PC-9 (cell line): ENCODE measurements at regions of chr14 and their contacts with region 1.

Region 1: DNA sequence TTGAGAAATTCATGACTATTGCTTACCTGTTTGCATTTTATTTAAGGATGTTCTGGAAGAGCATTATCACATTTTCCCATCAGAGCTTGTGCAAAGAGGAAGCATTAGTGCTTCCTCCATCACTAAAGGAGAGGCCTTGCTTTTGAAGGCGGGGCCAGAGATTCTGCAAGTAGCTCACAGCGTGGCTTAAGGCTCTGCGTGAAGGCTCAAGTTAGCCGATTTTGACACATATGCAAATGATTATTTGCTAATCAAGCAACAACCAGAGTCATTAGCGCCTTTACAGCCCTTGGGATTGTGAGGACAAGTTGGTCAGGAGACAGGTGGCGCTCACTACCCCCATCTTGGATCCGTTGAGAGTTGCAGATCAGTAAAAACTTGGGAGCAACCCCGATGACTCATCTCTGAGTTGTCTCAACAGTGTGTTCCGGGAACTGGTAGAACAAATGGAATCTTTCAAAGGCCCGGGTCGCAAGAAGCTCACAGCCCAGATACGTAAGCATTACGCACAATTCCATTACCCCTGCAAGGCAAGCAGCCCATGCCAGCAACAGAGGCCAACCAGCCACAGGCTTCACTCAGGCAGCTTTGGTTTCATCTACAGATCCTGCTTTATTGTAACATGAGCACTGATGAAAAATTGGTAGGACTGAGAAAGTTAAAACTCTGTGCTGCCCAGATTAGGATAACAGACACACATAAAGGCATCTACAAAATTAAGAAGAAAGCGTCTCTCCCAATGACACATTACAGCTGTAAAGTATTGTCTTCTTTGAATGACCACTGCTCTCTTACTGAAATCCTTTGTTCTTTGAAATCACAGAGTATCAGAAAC is 34.9 kb upstream of the SPTSSA start:
- DNase-seq: peak; percentile 70 to 89
- H3K4me3 ChIP-seq: peak overlapping the region; percentile 27; the same call in 1 of the 2 replicates
- H3K27ac ChIP-seq: peak overlapping the region; percentile 85
- H3K4me1 ChIP-seq: peaks cover 33% of the 10 kb centered on the region
- H3K27me3 ChIP-seq: no peaks in the 10 kb centered on the region
- CTCF ChIP-seq: no peak; the same call in 1 of the 2 replicates

Region 2: GRCh38 chr14:34425095-34425851 is 71.6 kb before region 1 on chr14:
- CTCF ChIA-PET with region 1: no interaction called
- POLR2A ChIA-PET with region 1: interaction called, 9 read pairs
- intact Hi-C with region 1: loop called (anchors 5 kb)
- DNase-seq: peak; percentile 67 to 87
- H3K4me3 ChIP-seq: no peak overlapping the region
- H3K27ac ChIP-seq: peak overlapping the region; percentile 93
- H3K4me1 ChIP-seq: peaks cover 22% of the 10 kb centered on the region
- H3K27me3 ChIP-seq: no peaks in the 10 kb centered on the region
- CTCF ChIP-seq: no peak

Region 3: GRCh38 chr14:34470319-34470718 is 26.6 kb before region 1 on chr14:
- CTCF ChIA-PET with region 1: interaction called, 10 read pairs
- POLR2A ChIA-PET with region 1: no interaction called
- intact Hi-C with region 1: no loop called
- DNase-seq: no peak
- H3K4me3 ChIP-seq: no peak overlapping the region
- H3K27ac ChIP-seq: no peak overlapping the region
- H3K4me1 ChIP-seq: no peaks in the 10 kb centered on the region
- H3K27me3 ChIP-seq: no peaks in the 10 kb centered on the region
- CTCF ChIP-seq: no peak

Region 4: DNA sequence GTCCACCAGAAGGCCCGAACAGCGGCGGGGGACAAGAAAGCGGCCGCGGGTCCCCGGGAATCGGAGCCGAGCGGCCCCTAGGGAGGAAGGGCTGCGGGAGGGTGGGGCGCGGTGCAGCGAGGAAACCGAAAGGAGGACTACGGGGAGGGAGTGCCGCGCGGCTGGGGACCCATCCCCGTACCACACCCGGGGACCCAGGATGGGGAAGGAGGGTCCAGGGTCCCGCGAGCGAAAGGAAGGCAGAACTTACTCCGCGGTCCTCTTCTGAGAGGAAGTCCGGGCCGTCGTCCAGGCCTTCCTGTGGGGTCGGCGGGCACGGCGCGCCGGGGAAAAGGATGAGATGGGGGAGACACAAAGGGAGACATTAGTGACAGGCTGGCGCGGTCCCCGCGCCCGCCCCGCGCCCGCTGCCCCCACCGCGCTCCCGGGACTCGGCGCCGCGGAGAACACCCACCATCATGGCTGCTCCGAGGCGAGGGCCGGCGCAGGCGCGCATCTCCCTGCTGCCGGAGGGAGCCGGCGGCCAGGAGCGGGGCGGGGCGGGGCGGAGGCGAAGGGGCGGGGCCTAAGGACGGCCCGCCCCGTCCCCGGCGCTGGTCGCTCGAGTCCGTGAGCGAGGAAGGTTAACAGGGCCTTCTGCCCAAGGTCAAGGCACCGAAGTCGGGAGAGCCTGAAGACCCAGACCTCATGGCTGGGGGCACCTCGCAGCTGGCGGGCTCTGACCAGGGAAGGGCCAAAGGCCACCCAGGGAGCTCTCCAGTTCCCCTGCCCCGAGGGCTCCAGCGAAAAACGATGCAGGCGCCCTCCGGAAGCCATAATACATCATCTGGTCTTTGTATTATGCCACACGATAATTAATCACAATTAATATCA is 133.0 kb after region 1 on chr14 and contains the start of gene SNX6:
- CTCF ChIA-PET with region 1: no interaction called
- POLR2A ChIA-PET with region 1: no interaction called
- intact Hi-C with region 1: no loop called
- DNase-seq: peak; percentile 38 to 64
- H3K4me3 ChIP-seq: peak within 1 kb of the TSS; percentile 86
- H3K27ac ChIP-seq: peak within 1 kb of the TSS; percentile 34; the same call in 1 of the 2 replicates
- H3K4me1 ChIP-seq: peaks cover 4% of the 10 kb centered on the region
- H3K27me3 ChIP-seq: no peaks in the 10 kb centered on the region
- CTCF ChIP-seq: no peak
- total RNA-seq, gene SNX6: 43.0 and 51.8 TPM in 2 replicates